T-cell (primary cell): ENCODE measurements at regions of chr4 and their contacts with region 1.

Region 1: GRCh38 chr4:174365018-174365587 is 81.4 kb downstream of the CEP44 start:
- DNase-seq: peak in 3 of 35 experiments; percentile 4 to 52 (median 8)
- ATAC-seq: no peak
- H3K4me3 ChIP-seq: no peak overlapping the region
- H3K4me3 Mint-ChIP-seq: no peak overlapping the region
- H3K27ac ChIP-seq: no peak overlapping the region
- H3K27ac Mint-ChIP-seq: no peak overlapping the region
- H3K4me1 ChIP-seq: no peaks in the 10 kb centered on the region
- H3K4me1 Mint-ChIP-seq: no peaks in the 10 kb centered on the region
- H3K27me3 ChIP-seq: no peaks in the 10 kb centered on the region
- H3K27me3 Mint-ChIP-seq: peaks cover 2 to 4% of the 10 kb centered on the region in 2 donors

Region 2: DNA sequence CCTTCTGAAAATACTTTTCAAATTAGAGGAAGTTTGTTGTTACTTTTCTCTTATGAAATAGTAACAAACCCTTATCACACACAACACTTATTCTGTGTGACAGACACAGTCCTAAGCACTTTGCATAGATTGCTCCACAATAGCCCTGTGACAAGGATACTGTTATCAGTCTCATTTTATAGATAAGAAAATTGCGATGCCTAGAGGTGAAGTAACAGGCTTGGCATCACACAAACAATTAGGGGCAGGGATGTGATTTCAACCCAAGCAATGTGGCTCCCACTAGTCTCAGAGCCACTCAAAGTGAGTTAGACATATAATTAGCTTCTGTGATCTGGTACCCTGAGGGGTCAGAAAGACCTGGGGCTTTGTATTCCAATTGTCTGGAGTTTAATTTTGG is 421.6 kb before region 1 on chr4:
- CTCF ChIA-PET with region 1: no interaction called
- POLR2A ChIA-PET with region 1: no interaction called
- DNase-seq: no peak
- ATAC-seq: no peak
- H3K4me3 ChIP-seq: no peak overlapping the region
- H3K4me3 Mint-ChIP-seq: no peak overlapping the region
- H3K27ac ChIP-seq: no peak overlapping the region
- H3K27ac Mint-ChIP-seq: no peak overlapping the region
- H3K4me1 ChIP-seq: no peaks in the 10 kb centered on the region
- H3K4me1 Mint-ChIP-seq: no peaks in the 10 kb centered on the region
- H3K27me3 ChIP-seq: peaks cover 0 to 3% of the 10 kb centered on the region in 2 experiments
- H3K27me3 Mint-ChIP-seq: no peaks in the 10 kb centered on the region

Region 3: DNA sequence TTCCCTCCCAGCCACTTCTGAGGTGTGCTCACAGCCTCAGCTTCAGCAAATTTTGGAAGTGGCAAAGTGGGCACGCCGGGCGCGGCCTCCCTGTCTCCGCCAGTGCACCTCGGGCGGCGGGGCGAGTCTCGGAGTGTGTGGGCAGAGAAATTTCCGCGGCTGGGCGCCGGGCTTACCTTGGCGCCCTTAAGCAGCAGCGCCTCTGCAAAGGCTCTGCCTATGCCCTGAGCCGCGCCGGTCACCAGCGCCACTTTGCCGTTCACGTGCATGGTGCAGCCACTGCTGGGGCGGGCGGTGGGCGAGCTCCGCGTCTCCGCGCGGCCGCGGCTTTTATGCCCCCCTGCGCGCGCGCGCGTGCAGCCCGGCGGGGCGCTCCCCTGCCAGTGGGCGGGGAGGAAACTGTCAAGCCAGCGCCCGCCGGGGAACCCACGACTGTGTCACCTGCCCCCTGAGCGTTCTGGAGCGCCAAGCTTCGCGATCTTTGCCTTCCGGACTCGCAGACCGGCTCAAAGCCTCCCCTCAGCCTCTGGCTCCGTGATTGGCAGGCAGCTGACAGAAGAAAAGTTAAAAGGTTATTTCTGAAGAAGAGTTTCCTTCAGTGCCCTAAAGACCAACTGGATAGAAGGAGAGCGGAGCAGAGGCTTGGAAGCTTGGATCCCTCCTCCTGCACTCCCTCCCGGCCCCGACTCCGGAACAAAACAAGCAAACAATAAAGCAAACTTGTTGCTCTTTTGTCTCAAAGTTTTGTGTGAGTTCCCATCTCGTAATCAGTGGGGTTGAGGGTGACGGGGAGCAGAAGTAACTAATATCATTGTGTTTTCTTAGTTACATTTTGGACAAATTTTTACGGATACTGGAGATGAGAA is 157.3 kb after region 1 on chr4 and contains the start of gene HPGD:
- CTCF ChIA-PET with region 1: no interaction called
- POLR2A ChIA-PET with region 1: interaction called in 1 of 2 experiments, 10 read pairs
- DNase-seq: peak; percentile 36 to 85 (median 63)
- ATAC-seq: peak; percentile 86 to 95 (median 91)
- H3K4me3 ChIP-seq: peak within 1 kb of the TSS; percentile 65 to 68
- H3K4me3 Mint-ChIP-seq: peak within 1 kb of the TSS; percentile 81 to 88 (median 83)
- H3K27ac ChIP-seq: peak within 1 kb of the TSS; percentile 59
- H3K27ac Mint-ChIP-seq: peak within 1 kb of the TSS; percentile 73 to 75
- H3K4me1 ChIP-seq: peaks cover 12 to 16% of the 10 kb centered on the region in 2 experiments
- H3K4me1 Mint-ChIP-seq: peaks cover 30 to 43% (median 33%) of the 10 kb centered on the region in 3 donors
- H3K27me3 ChIP-seq: peaks cover 0 to 13% of the 10 kb centered on the region in 2 experiments
- H3K27me3 Mint-ChIP-seq: peaks cover 5 to 32% of the 10 kb centered on the region in 2 donors
- total RNA-seq, gene HPGD: 3.5 to 14.6 (median 7.8) TPM

Region 4: DNA sequence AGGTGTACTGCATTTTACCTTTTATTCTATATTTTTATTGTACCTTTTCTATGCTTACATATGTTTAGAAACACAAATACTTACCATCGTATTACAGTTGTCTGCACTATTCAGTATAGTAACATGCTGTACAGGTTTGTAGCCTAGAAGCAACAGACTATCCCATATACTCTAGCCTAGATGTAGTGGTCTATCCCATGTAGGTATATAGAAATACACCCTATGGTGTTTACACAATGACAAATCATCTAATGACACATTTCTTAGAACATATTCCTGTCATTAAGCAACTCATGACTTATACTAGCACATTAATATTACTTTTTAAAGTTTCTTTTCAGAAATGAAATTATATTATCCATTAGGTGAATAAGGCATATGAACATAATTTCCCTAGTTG is 268.3 kb after region 1 on chr4:
- CTCF ChIA-PET with region 1: interaction called, 6 to 11 read pairs
- POLR2A ChIA-PET with region 1: no interaction called
- DNase-seq: no peak
- ATAC-seq: no peak
- H3K4me3 ChIP-seq: no peak overlapping the region
- H3K4me3 Mint-ChIP-seq: no peak overlapping the region
- H3K27ac ChIP-seq: no peak overlapping the region
- H3K27ac Mint-ChIP-seq: no peak overlapping the region
- H3K4me1 ChIP-seq: peaks cover 0 to 9% of the 10 kb centered on the region in 2 experiments
- H3K4me1 Mint-ChIP-seq: peaks cover 0 to 4% (median 4%) of the 10 kb centered on the region in 3 donors
- H3K27me3 ChIP-seq: no peaks in the 10 kb centered on the region
- H3K27me3 Mint-ChIP-seq: peaks cover 0 to 3% of the 10 kb centered on the region in 2 donors